ENCODE measurements at regions of chr6 and their contacts with region 1.

Region 1: GRCh38 chr6:166382933-166383801 is at the start of gene MPC1:
- DNase-seq: peak; percentile 80 to 93
- H3K4me3 ChIP-seq: peak within 1 kb of the TSS; percentile 97
- H3K27ac ChIP-seq: peak within 1 kb of the TSS; percentile 80
- H3K4me1 ChIP-seq: 0 out of 2 replicates have a peak, but pooled peaks cover 5% of the 10 kb centered on the region
- H3K27me3 ChIP-seq: no peaks in the 10 kb centered on the region
- CTCF ChIP-seq: no peak
- total RNA-seq, gene MPC1: 7.4 and 13.3 TPM in 2 replicates

Region 2: DNA sequence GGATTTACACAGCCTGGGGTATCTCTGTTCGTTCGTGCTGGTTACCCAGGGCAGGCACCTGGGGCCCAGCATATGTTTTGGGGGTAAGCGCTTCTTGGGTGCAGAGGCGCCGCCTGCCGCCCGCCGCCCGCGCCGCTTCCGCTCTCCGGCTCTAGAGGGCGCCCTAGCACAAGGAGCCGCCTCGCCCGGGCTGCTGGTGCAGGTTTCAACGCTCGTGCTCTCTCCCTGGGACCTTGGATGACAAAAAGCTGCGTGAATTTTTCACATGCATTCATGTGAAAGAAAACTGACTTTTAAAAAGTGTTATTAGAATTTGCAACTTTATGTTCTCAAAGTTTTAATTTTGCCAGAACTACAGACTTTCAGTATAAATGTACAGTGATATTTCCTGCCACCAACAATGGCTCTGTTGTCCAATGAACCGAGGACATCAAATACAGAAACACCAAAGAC is 107.4 kb before region 1 on chr6:
- CTCF ChIA-PET with region 1: no interaction called
- POLR2A ChIA-PET with region 1: no interaction called
- intact Hi-C with region 1: loop called (anchors 5 kb)
- DNase-seq: peak in 1 of 2 experiments; percentile 64
- H3K4me3 ChIP-seq: no peak overlapping the region
- H3K27ac ChIP-seq: no peak overlapping the region
- H3K4me1 ChIP-seq: no peaks in the 10 kb centered on the region
- H3K27me3 ChIP-seq: peaks cover 7% of the 10 kb centered on the region; the same call in 1 of the 2 replicates
- CTCF ChIP-seq: peak; percentile 93

Region 3: GRCh38 chr6:166313255-166314070 is 69.7 kb before region 1 on chr6:
- CTCF ChIA-PET with region 1: interaction called, 12 read pairs
- POLR2A ChIA-PET with region 1: no interaction called
- intact Hi-C with region 1: no loop called
- DNase-seq: no peak
- H3K4me3 ChIP-seq: no peak overlapping the region
- H3K27ac ChIP-seq: no peak overlapping the region
- H3K4me1 ChIP-seq: no peaks in the 10 kb centered on the region
- H3K27me3 ChIP-seq: no peaks in the 10 kb centered on the region
- CTCF ChIP-seq: peak; percentile 39; the same call in 1 of the 2 replicates

Region 4: DNA sequence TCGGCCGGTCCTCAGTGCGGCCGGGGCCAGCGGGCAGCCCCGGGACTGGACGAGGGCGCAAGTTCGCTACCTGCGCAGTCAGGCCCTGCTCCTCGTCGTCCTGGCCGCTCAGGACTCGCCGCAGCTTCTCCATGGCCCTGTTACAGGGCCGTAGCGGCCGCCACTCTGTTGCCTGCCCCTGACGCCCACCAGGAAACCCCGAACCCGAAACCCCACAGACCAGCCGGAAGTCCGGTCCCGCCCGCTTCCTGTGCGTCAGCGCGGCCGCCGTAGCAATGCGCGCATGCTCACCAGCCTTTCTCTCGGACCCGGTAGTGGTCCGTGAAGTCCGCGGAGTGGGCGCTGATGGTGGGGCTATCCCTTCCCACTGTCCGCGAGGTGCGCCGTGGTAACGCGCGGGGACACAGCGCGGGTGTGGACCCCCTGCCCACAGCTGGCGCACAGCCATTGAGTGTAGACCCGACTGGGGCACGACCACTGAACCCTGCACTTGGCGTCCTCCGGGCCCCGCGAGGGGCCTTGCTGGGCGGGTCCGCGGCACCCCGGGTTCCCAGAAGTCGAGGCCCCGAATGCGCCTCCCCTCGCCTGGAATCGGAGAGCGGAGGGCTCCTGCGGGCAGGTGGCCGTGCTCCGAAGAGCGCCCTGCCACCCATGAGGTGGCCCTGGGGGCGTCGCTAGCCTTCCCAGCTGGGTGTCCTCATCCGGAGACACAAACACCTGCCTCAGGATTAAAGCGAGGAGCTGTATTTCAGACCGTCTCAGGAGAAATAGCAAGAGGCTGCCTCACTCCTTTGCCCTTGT is 40.6 kb before region 1 on chr6 and contains the start of gene SFT2D1:
- CTCF ChIA-PET with region 1: no interaction called
- POLR2A ChIA-PET with region 1: no interaction called
- intact Hi-C with region 1: loop called (anchors 2 kb)
- DNase-seq: peak; percentile 53 to 63
- H3K4me3 ChIP-seq: peak within 1 kb of the TSS; percentile 89
- H3K27ac ChIP-seq: peak within 1 kb of the TSS; percentile 66
- H3K4me1 ChIP-seq: peaks cover 14% of the 10 kb centered on the region
- H3K27me3 ChIP-seq: no peaks in the 10 kb centered on the region
- CTCF ChIP-seq: no peak
- total RNA-seq, gene SFT2D1: 31.5 and 39.9 TPM in 2 replicates

Region 5: DNA sequence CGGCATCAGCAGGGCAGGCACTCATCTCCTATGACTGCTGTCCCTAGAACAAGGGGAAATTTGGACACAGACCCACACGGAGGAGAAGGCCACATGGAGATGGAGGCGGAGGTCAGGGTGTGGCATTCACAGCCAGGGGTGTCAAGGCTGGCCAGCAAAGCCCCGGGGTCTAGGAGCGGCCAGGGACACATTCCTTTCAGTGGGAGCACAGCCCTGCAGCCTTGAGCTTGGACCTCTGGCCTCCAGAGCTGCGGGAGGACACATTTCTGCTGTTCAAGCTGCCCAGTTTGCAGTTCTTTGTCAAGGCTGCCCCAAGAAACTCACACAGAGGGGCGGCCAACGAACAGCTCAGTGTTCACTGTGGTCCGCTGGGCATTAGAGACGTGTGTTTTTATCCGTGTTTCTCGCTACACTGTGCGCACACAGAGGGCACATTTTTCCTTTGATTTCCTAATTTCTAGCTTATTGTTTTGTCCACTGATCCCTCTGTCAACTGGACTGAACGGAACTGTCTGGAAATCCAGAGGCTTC is 93.0 kb after region 1 on chr6:
- CTCF ChIA-PET with region 1: interaction called, 16 read pairs
- POLR2A ChIA-PET with region 1: no interaction called
- intact Hi-C with region 1: no loop called
- DNase-seq: no peak
- H3K4me3 ChIP-seq: no peak overlapping the region
- H3K27ac ChIP-seq: no peak overlapping the region
- H3K4me1 ChIP-seq: no peaks in the 10 kb centered on the region
- H3K27me3 ChIP-seq: no peaks in the 10 kb centered on the region
- CTCF ChIP-seq: no peak

Region 6: DNA sequence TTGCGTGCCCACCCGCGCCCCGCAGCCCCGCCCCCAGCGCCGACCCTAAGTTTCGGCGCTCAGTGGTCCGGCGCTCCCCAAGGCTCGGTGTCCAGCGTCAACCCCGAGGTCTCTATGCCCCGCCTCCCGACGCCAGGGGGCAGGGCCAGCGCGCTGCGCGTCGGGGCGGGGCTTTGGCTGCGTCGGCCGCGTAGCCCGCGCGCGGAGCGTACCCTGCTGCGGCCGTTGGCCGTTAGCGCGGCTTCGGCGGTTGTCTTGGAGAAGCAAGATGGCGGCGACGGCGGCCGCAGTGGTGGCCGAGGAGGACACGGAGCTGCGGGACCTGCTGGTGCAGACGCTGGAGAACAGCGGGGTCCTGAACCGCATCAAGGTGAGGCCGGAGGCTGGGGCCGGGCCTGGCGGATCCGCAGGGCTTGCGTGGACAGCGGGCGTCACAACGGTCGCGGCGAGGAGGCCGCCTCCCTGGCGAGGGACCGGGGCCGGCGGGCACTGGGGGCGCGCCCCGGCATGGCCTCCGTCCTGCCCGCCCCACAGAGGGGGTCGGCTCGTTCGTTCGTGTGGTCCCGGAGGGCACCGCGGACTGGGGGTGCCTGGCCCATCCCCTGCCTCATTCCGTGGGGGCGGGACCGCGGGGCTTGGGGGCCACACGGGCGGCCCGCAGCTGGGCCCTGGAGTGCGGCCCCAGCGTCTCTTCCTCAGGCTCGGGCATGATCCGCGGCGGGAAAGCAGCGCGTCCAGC is 616.1 kb after region 1 on chr6 and contains the start of gene CEP43:
- CTCF ChIA-PET with region 1: no interaction called
- POLR2A ChIA-PET with region 1: no interaction called
- intact Hi-C with region 1: loop called (anchors 2 kb)
- DNase-seq: peak; percentile 77 to 89
- H3K4me3 ChIP-seq: peak within 1 kb of the TSS; percentile 98
- H3K27ac ChIP-seq: no peak within 1 kb of the TSS
- H3K4me1 ChIP-seq: peaks cover 16% of the 10 kb centered on the region
- H3K27me3 ChIP-seq: no peaks in the 10 kb centered on the region
- CTCF ChIP-seq: no peak
- total RNA-seq, gene CEP43: 18.1 and 19.7 TPM in 2 replicates

Region 7: GRCh38 chr6:167826230-167826895 is 1443.2 kb after region 1 on chr6:
- CTCF ChIA-PET with region 1: no interaction called
- POLR2A ChIA-PET with region 1: no interaction called
- intact Hi-C with region 1: no loop called
- DNase-seq: peak in 1 of 2 experiments; percentile 43
- H3K4me3 ChIP-seq: peak overlapping the region; percentile 91
- H3K27ac ChIP-seq: no peak overlapping the region
- H3K4me1 ChIP-seq: peaks cover 31% of the 10 kb centered on the region
- H3K27me3 ChIP-seq: no peaks in the 10 kb centered on the region
- CTCF ChIP-seq: peak; percentile 51